Naive thymus-derived CD4-positive, alpha-beta T cell (primary cell): ENCODE measurements at regions of chr14 and their contacts with region 1.

Region 1: DNA sequence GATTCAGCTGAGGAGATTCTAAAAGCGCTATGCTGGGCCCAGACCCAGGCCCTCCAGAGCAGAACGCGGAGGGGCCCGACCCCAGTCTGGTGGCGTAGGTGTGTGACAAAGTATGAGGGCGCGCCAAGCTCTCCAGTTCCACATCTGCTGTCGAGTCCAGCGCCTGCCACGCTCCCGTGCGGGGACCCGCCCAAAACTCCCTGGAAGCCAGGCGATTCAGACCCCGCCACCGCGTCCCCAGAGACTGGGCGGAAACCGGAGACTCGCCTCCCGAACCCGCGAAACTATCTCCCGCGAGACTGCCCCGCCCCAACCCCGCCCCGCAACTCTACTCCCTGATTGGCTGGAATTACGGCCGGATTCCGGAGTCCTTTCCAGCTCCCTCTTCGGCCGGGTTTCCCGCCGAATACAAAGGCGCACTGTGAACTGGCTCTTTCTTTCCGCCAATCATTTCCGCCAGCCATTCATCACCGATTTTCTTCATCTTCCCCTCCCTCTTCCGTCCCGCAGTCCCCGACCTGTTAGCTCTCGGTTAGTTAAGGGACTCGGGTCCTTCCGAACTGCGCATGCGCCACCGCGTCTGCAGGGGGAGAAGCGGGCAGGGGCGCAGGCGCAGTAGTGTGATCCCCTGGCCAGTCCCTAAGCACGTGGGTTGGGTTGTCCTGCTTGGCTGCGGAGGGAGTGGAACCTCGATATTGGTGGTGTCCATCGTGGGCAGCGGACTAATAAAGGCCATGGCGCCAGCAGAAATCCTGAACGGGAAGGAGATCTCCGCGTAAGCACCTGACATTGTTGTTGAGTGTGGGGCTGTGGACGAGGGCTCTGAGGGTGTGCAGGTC is at the start of gene MTHFD1:
- DNase-seq: peak; percentile 93 to 97 (median 96)
- ATAC-seq: peak; percentile 90
- H3K4me3 ChIP-seq: peak within 1 kb of the TSS; percentile 89
- H3K4me3 Mint-ChIP-seq: peak within 1 kb of the TSS; percentile 92 to 99 (median 96)
- H3K27ac ChIP-seq: peak within 1 kb of the TSS; percentile 79
- H3K27ac Mint-ChIP-seq: peak within 1 kb of the TSS; percentile 90 to 99 (median 95)
- H3K4me1 ChIP-seq: peaks cover 11 to 17% of the 10 kb centered on the region in 2 donors
- H3K4me1 Mint-ChIP-seq: peaks cover 18 to 49% (median 41%) of the 10 kb centered on the region in 7 donors
- H3K27me3 ChIP-seq: no peaks in the 10 kb centered on the region
- H3K27me3 Mint-ChIP-seq: peaks cover 0 to 4% (median 0%) of the 10 kb centered on the region in 5 donors
- total RNA-seq, gene MTHFD1: 28.0 to 189 (median 30.2) TPM

Region 2: GRCh38 chr14:64338616-64339316 is 49.1 kb before region 1 on chr14:
- CTCF ChIA-PET with region 1: no interaction called
- POLR2A ChIA-PET with region 1: no interaction called
- intact Hi-C with region 1: loop called (anchors 1 kb)
- DNase-seq: peak; percentile 50 to 84 (median 79)
- ATAC-seq: peak; percentile 87
- H3K4me3 ChIP-seq: peak overlapping the region; percentile 57
- H3K4me3 Mint-ChIP-seq: peak overlapping the region; percentile 87 to 99 (median 92)
- H3K27ac ChIP-seq: peak overlapping the region; percentile 72
- H3K27ac Mint-ChIP-seq: peak overlapping the region; percentile 81 to 91 (median 86)
- H3K4me1 ChIP-seq: peaks cover 5 to 10% of the 10 kb centered on the region in 2 donors
- H3K4me1 Mint-ChIP-seq: peaks cover 6 to 36% (median 19%) of the 10 kb centered on the region in 7 donors
- H3K27me3 ChIP-seq: no peaks in the 10 kb centered on the region
- H3K27me3 Mint-ChIP-seq: no peaks in the 10 kb centered on the region

Region 3: GRCh38 chr14:64400829-64401459 is 13.0 kb after region 1 on chr14:
- CTCF ChIA-PET with region 1: no interaction called
- POLR2A ChIA-PET with region 1: interaction called, 12 read pairs
- intact Hi-C with region 1: no loop called
- DNase-seq: no peak
- ATAC-seq: no peak
- H3K4me3 ChIP-seq: no peak overlapping the region
- H3K4me3 Mint-ChIP-seq: no peak overlapping the region
- H3K27ac ChIP-seq: no peak overlapping the region
- H3K27ac Mint-ChIP-seq: no peak overlapping the region
- H3K4me1 ChIP-seq: no peaks in the 10 kb centered on the region
- H3K4me1 Mint-ChIP-seq: peaks cover 0 to 14% (median 3%) of the 10 kb centered on the region in 7 donors
- H3K27me3 ChIP-seq: no peaks in the 10 kb centered on the region
- H3K27me3 Mint-ChIP-seq: no peaks in the 10 kb centered on the region

Region 4: DNA sequence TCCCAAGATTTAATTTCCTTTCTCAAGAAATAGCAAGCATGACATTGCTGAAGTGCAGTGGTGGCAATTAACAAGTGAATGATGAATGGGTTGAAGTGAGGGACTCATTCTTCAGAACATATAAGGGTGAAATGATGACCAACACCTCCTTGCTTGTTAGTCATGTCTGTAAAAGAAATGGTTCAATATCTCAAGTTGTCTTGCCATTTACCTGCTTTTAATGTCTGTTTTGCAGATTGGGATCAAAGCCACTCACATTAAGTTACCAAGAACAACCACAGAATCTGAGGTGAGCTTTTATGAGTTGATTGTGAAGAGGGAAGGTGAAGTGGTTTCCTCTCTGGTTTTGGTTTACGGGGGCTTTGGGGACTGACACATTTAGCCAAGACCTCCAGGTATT is 24.3 kb after region 1 on chr14:
- CTCF ChIA-PET with region 1: no interaction called
- POLR2A ChIA-PET with region 1: no interaction called
- intact Hi-C with region 1: loop called in 1 of 2 experiments (anchors 2 kb)
- DNase-seq: no peak
- ATAC-seq: no peak
- H3K4me3 ChIP-seq: no peak overlapping the region
- H3K4me3 Mint-ChIP-seq: no peak overlapping the region
- H3K27ac ChIP-seq: no peak overlapping the region
- H3K27ac Mint-ChIP-seq: no peak overlapping the region
- H3K4me1 ChIP-seq: no peaks in the 10 kb centered on the region
- H3K4me1 Mint-ChIP-seq: peaks cover 0 to 26% (median 0%) of the 10 kb centered on the region in 7 donors
- H3K27me3 ChIP-seq: no peaks in the 10 kb centered on the region
- H3K27me3 Mint-ChIP-seq: no peaks in the 10 kb centered on the region